Panc1 (cell line): ENCODE measurements at regions of chr3 and their contacts with region 1.

Region 1: GRCh38 chr3:168047190-168047795 is 48.4 kb downstream of the GOLIM4 start:
- DNase-seq: peak; percentile 61
- ATAC-seq: peak; percentile 91
- H3K4me3 ChIP-seq: no peak overlapping the region
- H3K27ac ChIP-seq: no peak overlapping the region
- H3K4me1 ChIP-seq: no peaks in the 10 kb centered on the region
- H3K27me3 ChIP-seq: no peaks in the 10 kb centered on the region
- CTCF ChIP-seq: peak; percentile 86; the same call in 1 of the 2 replicates

Region 2: GRCh38 chr3:167734498-167735232 is 312.6 kb before region 1 on chr3 and contains the start of gene PDCD10:
- CTCF ChIA-PET with region 1: no interaction called
- POLR2A ChIA-PET with region 1: no interaction called
- in situ Hi-C with region 1: no loop called
- intact Hi-C with region 1: loop called (anchors 10 kb)
- DNase-seq: peak; percentile 97
- ATAC-seq: peak; percentile 95
- H3K4me3 ChIP-seq: peak within 1 kb of the TSS; percentile 91 to 94
- H3K27ac ChIP-seq: peak within 1 kb of the TSS; percentile 94
- H3K4me1 ChIP-seq: peaks cover 37% of the 10 kb centered on the region
- H3K27me3 ChIP-seq: no peaks in the 10 kb centered on the region
- CTCF ChIP-seq: no peak
- total RNA-seq, gene PDCD10: 83.5 TPM

Region 3: GRCh38 chr3:167899093-167899492 is 148.2 kb before region 1 on chr3:
- CTCF ChIA-PET with region 1: no interaction called
- POLR2A ChIA-PET with region 1: no interaction called
- in situ Hi-C with region 1: no loop called
- intact Hi-C with region 1: no loop called
- DNase-seq: no peak
- ATAC-seq: no peak
- H3K4me3 ChIP-seq: no peak overlapping the region
- H3K27ac ChIP-seq: no peak overlapping the region
- H3K4me1 ChIP-seq: no peaks in the 10 kb centered on the region
- H3K27me3 ChIP-seq: peaks cover 2% of the 10 kb centered on the region; the same call in 1 of the 2 replicates
- CTCF ChIP-seq: no peak

Region 4: GRCh38 chr3:168073842-168074635 is 26.7 kb after region 1 on chr3:
- CTCF ChIA-PET with region 1: interaction called, 10 read pairs
- POLR2A ChIA-PET with region 1: no interaction called
- in situ Hi-C with region 1: no loop called
- intact Hi-C with region 1: no loop called
- DNase-seq: no peak
- ATAC-seq: no peak
- H3K4me3 ChIP-seq: no peak overlapping the region
- H3K27ac ChIP-seq: no peak overlapping the region
- H3K4me1 ChIP-seq: no peaks in the 10 kb centered on the region
- H3K27me3 ChIP-seq: no peaks in the 10 kb centered on the region
- CTCF ChIP-seq: no peak

Region 5: GRCh38 chr3:168095611-168096209 is 48.4 kb after region 1 on chr3 and contains the start of gene GOLIM4:
- CTCF ChIA-PET with region 1: interaction called, 9 read pairs
- POLR2A ChIA-PET with region 1: no interaction called
- in situ Hi-C with region 1: no loop called
- intact Hi-C with region 1: loop called (anchors 2 kb)
- DNase-seq: peak; percentile 76
- ATAC-seq: peak; percentile 96
- H3K4me3 ChIP-seq: peak within 1 kb of the TSS; percentile 81 to 85
- H3K27ac ChIP-seq: peak within 1 kb of the TSS; percentile 87
- H3K4me1 ChIP-seq: peaks cover 39% of the 10 kb centered on the region
- H3K27me3 ChIP-seq: no peaks in the 10 kb centered on the region
- CTCF ChIP-seq: no peak; the same call in 1 of the 2 replicates
- total RNA-seq, gene GOLIM4: 35.4 TPM

Region 6: GRCh38 chr3:168165390-168166269 is 118.3 kb after region 1 on chr3:
- CTCF ChIA-PET with region 1: interaction called, 13 read pairs
- POLR2A ChIA-PET with region 1: interaction called, 8 read pairs
- in situ Hi-C with region 1: no loop called
- intact Hi-C with region 1: loop called (anchors 1 kb)
- DNase-seq: peak; percentile 59
- ATAC-seq: peak; percentile 92
- H3K4me3 ChIP-seq: peak overlapping the region in 1 of 2 experiments; percentile 10; a peak in 1 of 4 replicates
- H3K27ac ChIP-seq: no peak overlapping the region
- H3K4me1 ChIP-seq: no peaks in the 10 kb centered on the region
- H3K27me3 ChIP-seq: no peaks in the 10 kb centered on the region
- CTCF ChIP-seq: peak; percentile 78

Region 7: DNA sequence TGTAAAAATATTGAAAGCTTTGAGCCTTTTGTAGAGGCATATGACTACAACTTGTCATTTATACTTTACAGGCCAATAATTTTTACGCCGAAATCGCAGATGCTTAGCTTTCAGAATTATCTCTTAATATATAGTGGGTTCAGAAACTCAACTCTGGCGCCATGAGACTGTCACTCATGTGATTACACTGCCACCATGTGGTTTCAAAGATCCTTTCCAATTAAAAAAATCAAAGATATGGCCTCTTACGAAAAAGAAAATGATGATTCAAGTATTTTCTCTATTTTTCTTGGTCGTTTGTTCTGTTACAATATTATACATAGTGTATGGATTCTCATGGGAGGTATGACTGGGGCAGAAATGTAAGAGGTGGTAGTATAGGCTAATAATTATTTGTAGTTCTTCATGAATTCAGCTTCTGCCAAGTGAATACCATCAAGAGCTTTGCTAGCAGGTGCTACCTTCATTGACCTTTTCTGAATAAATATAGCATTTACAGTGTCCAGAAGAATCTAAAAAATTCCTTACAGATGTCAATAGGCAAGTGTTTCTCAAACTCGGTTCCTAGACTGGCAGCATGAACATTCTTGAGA is 800.1 kb after region 1 on chr3:
- CTCF ChIA-PET with region 1: no interaction called
- POLR2A ChIA-PET with region 1: no interaction called
- in situ Hi-C with region 1: no loop called
- intact Hi-C with region 1: loop called (anchors 2 kb)
- DNase-seq: no peak
- ATAC-seq: peak; percentile 62
- H3K4me3 ChIP-seq: no peak overlapping the region
- H3K27ac ChIP-seq: no peak overlapping the region
- H3K4me1 ChIP-seq: no peaks in the 10 kb centered on the region
- H3K27me3 ChIP-seq: peaks cover 6% of the 10 kb centered on the region; the same call in 1 of the 2 replicates
- CTCF ChIP-seq: peak; percentile 68; the same call in 1 of the 2 replicates